SK-N-SH (cell line): ENCODE measurements at regions of chr5 and their contacts with region 1.

Region 1: GRCh38 chr5:143403593-143404415 is at the start of gene NR3C1:
- DNase-seq: peak; percentile 88
- H3K4me3 ChIP-seq: peak within 1 kb of the TSS; percentile 83 to 90
- H3K27ac ChIP-seq: peak within 1 kb of the TSS; percentile 94 to 99
- H3K4me1 ChIP-seq: peaks cover 9 to 19% of the 10 kb centered on the region in 2 experiments; a peak in 3 of 4 replicates
- H3K27me3 ChIP-seq: no peaks in the 10 kb centered on the region
- CTCF ChIP-seq: peak; percentile 46
- EP300 ChIP-seq: no peak
- RAD21 ChIP-seq: peak; percentile 56
- polyA plus RNA-seq, gene NR3C1: 7.1 and 8.2 TPM in 2 replicates

Region 2: DNA sequence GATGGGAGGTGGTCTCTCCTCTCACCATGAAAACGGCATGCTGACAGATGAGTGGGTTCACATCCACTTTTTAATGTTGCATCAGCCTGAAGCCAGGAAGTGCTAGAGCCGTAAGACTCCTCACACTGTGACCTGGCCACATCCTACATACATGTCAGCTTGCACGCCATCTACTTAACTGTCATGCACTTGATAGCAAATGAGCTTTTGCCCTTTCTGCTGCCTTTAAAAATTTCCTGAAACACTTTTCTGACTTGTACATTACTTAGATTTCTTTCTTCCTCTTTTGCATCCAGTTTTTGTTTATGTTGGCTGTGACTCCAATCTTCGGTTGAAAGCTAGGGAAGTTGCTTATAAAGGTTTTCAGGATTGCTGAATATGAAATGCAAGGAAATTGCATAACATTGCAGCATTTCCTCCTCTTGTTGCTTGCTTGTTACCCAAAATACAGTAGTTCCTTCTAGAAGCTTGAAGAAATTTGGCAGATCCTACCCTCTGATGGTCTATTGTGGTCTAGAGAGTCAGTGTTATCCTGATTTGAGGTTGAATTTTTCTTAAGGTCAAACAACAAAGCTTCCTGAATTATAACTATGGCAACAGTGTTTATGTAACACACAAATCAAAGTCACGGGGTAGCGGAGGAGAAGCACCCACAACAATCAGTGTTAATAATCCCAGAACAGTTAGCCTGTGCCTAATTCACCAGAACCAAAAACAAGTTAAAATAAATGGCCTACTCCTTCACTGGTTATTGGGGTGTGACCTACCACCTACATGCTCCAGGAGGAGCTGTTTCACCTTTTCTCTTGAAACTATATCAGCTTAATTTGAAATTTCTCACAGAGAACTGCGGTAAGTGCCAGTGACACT is 401.1 kb before region 1 on chr5:
- CTCF ChIA-PET with region 1: interaction called, 17 read pairs
- POLR2A ChIA-PET with region 1: interaction called, 3 read pairs
- DNase-seq: no peak
- H3K4me3 ChIP-seq: no peak overlapping the region; a peak in 1 of 4 replicates
- H3K27ac ChIP-seq: peak overlapping the region; percentile 16 to 78; a peak in 3 of 4 replicates
- H3K4me1 ChIP-seq: peaks cover 0 to 20% of the 10 kb centered on the region in 2 experiments; a peak in 3 of 4 replicates
- H3K27me3 ChIP-seq: no peaks in the 10 kb centered on the region
- CTCF ChIP-seq: peak; percentile 68
- EP300 ChIP-seq: no peak
- RAD21 ChIP-seq: peak; percentile 63

Region 3: GRCh38 chr5:143106174-143106573 is 297.6 kb before region 1 on chr5:
- CTCF ChIA-PET with region 1: interaction called, 24 read pairs
- POLR2A ChIA-PET with region 1: interaction called, 3 read pairs
- DNase-seq: peak; percentile 45
- H3K4me3 ChIP-seq: no peak overlapping the region
- H3K27ac ChIP-seq: no peak overlapping the region
- H3K4me1 ChIP-seq: peaks cover 0 to 24% of the 10 kb centered on the region in 2 experiments; a peak in 3 of 4 replicates
- H3K27me3 ChIP-seq: no peaks in the 10 kb centered on the region
- CTCF ChIP-seq: peak; percentile 57
- EP300 ChIP-seq: no peak
- RAD21 ChIP-seq: peak; percentile 83

Region 4: GRCh38 chr5:143435210-143435657 is 31.4 kb after region 1 on chr5:
- CTCF ChIA-PET with region 1: interaction called, 11 read pairs
- POLR2A ChIA-PET with region 1: no interaction called
- DNase-seq: no peak
- H3K4me3 ChIP-seq: no peak overlapping the region
- H3K27ac ChIP-seq: peak overlapping the region in 1 of 2 experiments; percentile 84; a peak in 2 of 4 replicates
- H3K4me1 ChIP-seq: peaks cover 0 to 13% of the 10 kb centered on the region in 2 experiments; a peak in 2 of 4 replicates
- H3K27me3 ChIP-seq: no peaks in the 10 kb centered on the region
- CTCF ChIP-seq: no peak
- EP300 ChIP-seq: no peak
- RAD21 ChIP-seq: no peak

Region 5: GRCh38 chr5:143693651-143694252 is 289.9 kb after region 1 on chr5:
- CTCF ChIA-PET with region 1: no interaction called
- POLR2A ChIA-PET with region 1: no interaction called
- DNase-seq: no peak
- H3K4me3 ChIP-seq: no peak overlapping the region
- H3K27ac ChIP-seq: no peak overlapping the region
- H3K4me1 ChIP-seq: no peaks in the 10 kb centered on the region; a peak in 1 of 4 replicates
- H3K27me3 ChIP-seq: no peaks in the 10 kb centered on the region
- CTCF ChIP-seq: no peak
- EP300 ChIP-seq: no peak
- RAD21 ChIP-seq: no peak